Ovary (tissue), 10 donors: ENCODE measurements at regions of chr1 and their contacts with region 1.

Region 1: GRCh38 chr1:51973603-51974474 is 16.7 kb downstream of the RAB3B start:
- DNase-seq: no peak
- H3K4me3 ChIP-seq: no peak overlapping the region
- H3K27ac ChIP-seq: no peak overlapping the region
- H3K4me1 ChIP-seq: no peaks in the 10 kb centered on the region
- H3K27me3 ChIP-seq: no peaks in the 10 kb centered on the region
- CTCF ChIP-seq: no peak
- EP300 ChIP-seq: no peak
- POLR2A ChIP-seq: no peak

Region 2: GRCh38 chr1:50880373-50880772 is 1093.5 kb before region 1 on chr1:
- intact Hi-C with region 1: loop called in 1 of 4 experiments (anchors 5 kb)
- DNase-seq: no peak
- H3K4me3 ChIP-seq: no peak overlapping the region
- H3K27ac ChIP-seq: no peak overlapping the region
- H3K4me1 ChIP-seq: peaks cover 4% of the 10 kb centered on the region
- H3K27me3 ChIP-seq: no peaks in the 10 kb centered on the region
- CTCF ChIP-seq: no peak
- EP300 ChIP-seq: no peak
- POLR2A ChIP-seq: no peak

Region 3: GRCh38 chr1:52022133-52022532 is 48.3 kb after region 1 on chr1:
- intact Hi-C with region 1: no loop called
- DNase-seq: no peak
- H3K4me3 ChIP-seq: no peak overlapping the region
- H3K27ac ChIP-seq: no peak overlapping the region
- H3K4me1 ChIP-seq: no peaks in the 10 kb centered on the region
- H3K27me3 ChIP-seq: no peaks in the 10 kb centered on the region
- CTCF ChIP-seq: no peak
- EP300 ChIP-seq: no peak
- POLR2A ChIP-seq: no peak

Region 4: DNA sequence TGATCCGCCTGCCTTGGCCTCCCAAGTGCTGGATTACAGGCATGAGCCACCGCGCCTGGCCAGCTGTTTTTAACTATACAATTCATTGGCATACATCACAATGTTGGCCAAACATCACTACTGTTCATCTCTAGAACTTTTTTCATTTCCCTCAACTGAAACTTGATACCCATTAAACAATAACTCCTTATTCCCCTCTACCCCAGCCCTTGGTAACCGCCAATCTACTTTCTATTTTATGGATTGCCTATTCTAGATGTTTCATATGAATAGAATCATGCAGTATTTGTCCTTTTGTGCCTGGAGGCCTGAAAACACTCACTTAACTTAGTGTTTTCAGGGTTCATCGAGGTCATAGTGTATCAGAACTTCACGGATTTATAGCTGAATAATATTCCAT is 98.5 kb after region 1 on chr1:
- intact Hi-C with region 1: no loop called
- DNase-seq: no peak
- H3K4me3 ChIP-seq: no peak overlapping the region
- H3K27ac ChIP-seq: no peak overlapping the region
- H3K4me1 ChIP-seq: no peaks in the 10 kb centered on the region
- H3K27me3 ChIP-seq: no peaks in the 10 kb centered on the region
- CTCF ChIP-seq: no peak
- EP300 ChIP-seq: no peak
- POLR2A ChIP-seq: no peak